MCF 10A (cell line): ENCODE measurements at regions of chr17 and their contacts with region 1.

Region 1: GRCh38 chr17:61420052-61420451 is 20.4 kb downstream of the TBX2 start:
- DNase-seq: no peak
- H3K4me3 Mint-ChIP-seq: no peak overlapping the region
- H3K27ac Mint-ChIP-seq: no peak overlapping the region
- H3K4me1 Mint-ChIP-seq: no peaks in the 10 kb centered on the region
- H3K27me3 Mint-ChIP-seq: peaks cover 33% of the 10 kb centered on the region
- CTCF ChIP-seq: no peak

Region 2: GRCh38 chr17:60804831-60805230 is 615.2 kb before region 1 on chr17:
- CTCF ChIA-PET with region 1: no interaction called
- POLR2A ChIA-PET with region 1: no interaction called
- intact Hi-C with region 1: no loop called
- DNase-seq: no peak
- H3K4me3 Mint-ChIP-seq: no peak overlapping the region
- H3K27ac Mint-ChIP-seq: no peak overlapping the region
- H3K4me1 Mint-ChIP-seq: peaks cover 7% of the 10 kb centered on the region
- H3K27me3 Mint-ChIP-seq: no peaks in the 10 kb centered on the region
- CTCF ChIP-seq: no peak

Region 3: DNA sequence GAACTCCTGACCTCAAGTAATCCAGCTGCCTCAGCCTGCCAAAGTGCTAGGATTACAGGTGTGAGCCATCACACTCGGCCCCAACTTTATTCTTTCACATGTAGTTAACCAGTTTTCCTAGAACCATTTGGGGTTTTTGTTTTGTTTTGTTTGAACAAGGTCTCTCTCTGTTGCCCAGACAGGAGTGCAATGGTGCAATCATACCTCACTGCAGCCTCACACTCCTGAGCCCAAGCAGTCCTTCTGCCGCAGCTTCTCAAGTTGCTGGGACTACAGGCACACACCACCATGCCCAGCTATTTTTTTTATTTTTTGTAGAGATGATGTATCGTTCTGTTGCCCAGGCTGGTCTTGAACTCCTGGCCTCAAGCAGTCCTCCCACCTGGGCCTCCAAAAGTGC is 148.4 kb before region 1 on chr17:
- CTCF ChIA-PET with region 1: no interaction called
- POLR2A ChIA-PET with region 1: no interaction called
- intact Hi-C with region 1: no loop called
- DNase-seq: no peak
- H3K4me3 Mint-ChIP-seq: no peak overlapping the region
- H3K27ac Mint-ChIP-seq: no peak overlapping the region
- H3K4me1 Mint-ChIP-seq: no peaks in the 10 kb centered on the region
- H3K27me3 Mint-ChIP-seq: no peaks in the 10 kb centered on the region
- CTCF ChIP-seq: no peak

Region 4: GRCh38 chr17:61551255-61551742 is 131.2 kb after region 1 on chr17:
- CTCF ChIA-PET with region 1: interaction called, 57 read pairs
- POLR2A ChIA-PET with region 1: no interaction called
- intact Hi-C with region 1: loop called (anchors 1 kb)
- DNase-seq: peak; percentile 54
- H3K4me3 Mint-ChIP-seq: no peak overlapping the region
- H3K27ac Mint-ChIP-seq: no peak overlapping the region
- H3K4me1 Mint-ChIP-seq: no peaks in the 10 kb centered on the region
- H3K27me3 Mint-ChIP-seq: peaks cover 42% of the 10 kb centered on the region
- CTCF ChIP-seq: peak; percentile 66